ENCODE measurements at regions of chr1 and their contacts with region 1.

Region 1: DNA sequence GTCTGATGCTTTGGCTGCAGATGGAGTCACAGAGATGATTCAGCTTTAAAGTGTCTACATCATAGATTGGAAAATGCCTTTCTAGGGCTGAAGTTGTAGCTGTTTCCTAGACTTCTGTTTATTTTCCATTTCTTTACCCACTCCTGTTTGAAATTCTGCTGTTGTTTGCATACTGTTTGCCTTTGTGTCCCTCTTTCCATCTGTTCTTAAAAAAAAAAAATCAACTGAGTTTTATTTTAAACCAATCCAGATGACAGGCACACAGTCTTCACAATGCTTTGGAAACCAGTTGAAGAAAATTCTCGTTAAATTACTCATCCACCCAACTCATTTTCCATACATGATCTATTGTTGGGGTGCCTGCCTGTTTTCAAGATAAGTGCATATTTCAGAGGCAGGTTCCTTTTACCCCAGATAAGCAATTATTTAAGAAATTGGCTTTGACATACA is 245.9 kb downstream of the DISC1 start:
- DNase-seq: no peak
- H3K4me3 ChIP-seq: no peak overlapping the region
- H3K27ac ChIP-seq: no peak overlapping the region
- H3K4me1 ChIP-seq: peaks cover 0 to 5% (median 0%) of the 10 kb centered on the region in 4 donors
- H3K27me3 ChIP-seq: no peaks in the 10 kb centered on the region
- CTCF ChIP-seq: no peak
- EP300 ChIP-seq: no peak
- POLR2A ChIP-seq: no peak

Region 2: DNA sequence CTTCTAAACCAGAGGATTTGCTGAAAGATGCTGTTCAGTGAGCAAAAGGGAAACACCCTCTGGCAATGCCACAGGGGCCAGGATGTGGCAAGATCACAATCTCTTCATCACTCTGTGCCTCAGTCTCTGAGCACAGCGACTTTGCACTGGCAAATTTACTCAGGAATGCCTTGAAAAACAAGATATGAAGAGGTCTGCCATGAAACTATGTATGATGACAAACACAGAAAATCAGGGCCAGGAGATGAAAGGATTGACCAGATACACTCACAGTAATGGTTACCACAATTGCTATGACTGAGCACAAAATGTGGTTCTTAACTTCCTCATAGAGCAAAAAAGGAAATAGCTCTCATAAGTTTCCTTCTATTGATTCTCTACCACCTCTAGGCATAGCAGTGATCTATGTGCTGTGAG is 899.6 kb before region 1 on chr1:
- in situ Hi-C with region 1: no loop called
- intact Hi-C with region 1: loop called (anchors 5 kb)
- DNase-seq: peak; percentile 31
- H3K4me3 ChIP-seq: no peak overlapping the region
- H3K27ac ChIP-seq: peak overlapping the region in 3 of 4 donors; percentile 7 to 15 (median 14)
- H3K4me1 ChIP-seq: peaks cover 0 to 21% (median 16%) of the 10 kb centered on the region in 4 donors
- H3K27me3 ChIP-seq: no peaks in the 10 kb centered on the region
- CTCF ChIP-seq: no peak
- EP300 ChIP-seq: no peak
- POLR2A ChIP-seq: no peak

Measured in transverse colon (tissue), 4 donors.